CD4-positive, alpha-beta T cell (primary cell): ENCODE measurements at regions of chr11 and their contacts with region 1.

Region 1: GRCh38 chr11:2151500-2152257 is 9.3 kb downstream of the INS start:
- DNase-seq: peak; percentile 69 to 89 (median 76)
- ATAC-seq: peak; percentile 89
- H3K4me3 ChIP-seq: peak overlapping the region; percentile 8
- H3K4me3 Mint-ChIP-seq: peak overlapping the region; percentile 6
- H3K27ac ChIP-seq: no peak overlapping the region
- H3K27ac Mint-ChIP-seq: no peak overlapping the region
- H3K4me1 ChIP-seq: peaks cover 10% of the 10 kb centered on the region
- H3K4me1 Mint-ChIP-seq: peaks cover 9% of the 10 kb centered on the region
- H3K27me3 ChIP-seq: peaks cover 41 to 44% of the 10 kb centered on the region in 2 experiments
- H3K27me3 Mint-ChIP-seq: peaks cover 42% of the 10 kb centered on the region
- CTCF ChIP-seq: peak; percentile 78

Region 2: DNA sequence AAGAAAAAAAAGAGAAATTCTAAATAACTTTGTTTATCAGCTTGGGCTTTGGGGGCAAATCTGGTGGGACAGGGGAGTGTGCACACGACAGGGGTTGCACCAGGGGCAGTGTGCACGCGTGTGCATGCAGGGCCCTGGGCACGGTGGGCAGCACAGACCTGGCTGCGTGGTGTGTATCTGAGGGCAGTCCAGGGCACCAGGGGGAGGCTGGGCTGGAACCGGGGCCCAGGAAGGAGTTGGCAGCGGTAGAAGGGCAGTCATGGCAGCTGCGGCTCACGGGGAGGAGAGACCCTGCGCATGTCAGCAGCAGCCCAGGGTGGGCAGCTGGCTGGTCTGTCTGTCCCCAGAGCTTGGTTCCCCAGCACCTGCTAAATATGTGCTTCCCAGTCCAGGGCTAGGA is 517.8 kb before region 1 on chr11:
- CTCF ChIA-PET with region 1: no interaction called
- POLR2A ChIA-PET with region 1: no interaction called
- intact Hi-C with region 1: no loop called
- DNase-seq: no peak
- ATAC-seq: no peak
- H3K4me3 ChIP-seq: no peak overlapping the region
- H3K4me3 Mint-ChIP-seq: no peak overlapping the region
- H3K27ac ChIP-seq: no peak overlapping the region
- H3K27ac Mint-ChIP-seq: no peak overlapping the region
- H3K4me1 ChIP-seq: peaks cover 5% of the 10 kb centered on the region
- H3K4me1 Mint-ChIP-seq: peaks cover 9% of the 10 kb centered on the region
- H3K27me3 ChIP-seq: peaks cover 12 to 17% of the 10 kb centered on the region in 2 experiments
- H3K27me3 Mint-ChIP-seq: peaks cover 46% of the 10 kb centered on the region
- CTCF ChIP-seq: no peak

Region 3: DNA sequence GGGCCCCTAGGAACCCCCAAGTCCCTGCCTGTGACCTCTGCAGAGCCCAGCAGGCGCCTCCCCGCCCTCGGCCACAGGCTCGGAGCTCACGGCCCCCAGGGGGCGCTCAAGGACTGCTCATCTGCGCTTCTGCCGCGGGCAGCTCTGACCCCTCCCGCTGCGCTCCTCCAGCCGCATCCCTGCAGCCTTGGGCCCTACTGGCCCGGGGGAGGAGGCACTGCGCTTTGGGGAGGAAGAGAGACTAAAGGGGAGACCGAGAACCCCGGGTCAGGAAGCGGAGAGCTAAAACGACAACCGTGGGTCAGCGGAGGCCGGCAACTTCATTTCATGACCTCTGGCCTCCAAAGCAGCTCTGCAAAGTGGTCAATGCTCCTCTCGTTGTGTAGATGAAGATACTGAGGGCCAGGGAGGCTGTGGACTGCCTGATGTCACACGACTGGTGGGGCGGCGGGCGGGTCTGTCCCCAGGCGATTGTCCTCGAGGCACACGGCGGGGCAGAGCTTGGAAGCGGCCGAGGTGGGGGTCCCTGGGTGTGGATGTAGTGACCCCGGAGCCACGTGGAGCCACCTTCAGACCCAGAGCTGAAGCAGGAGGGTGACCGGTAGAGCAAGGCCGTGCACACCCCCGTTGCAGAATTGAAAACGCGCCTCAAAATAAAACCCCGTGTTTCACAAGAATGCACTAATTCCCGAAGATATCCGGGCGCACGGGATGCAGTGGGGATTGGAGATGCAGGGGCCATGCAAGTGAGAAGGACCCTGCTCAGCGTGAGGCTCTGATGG is 457.4 kb before region 1 on chr11:
- CTCF ChIA-PET with region 1: interaction called, 27 read pairs
- POLR2A ChIA-PET with region 1: no interaction called
- intact Hi-C with region 1: loop called (anchors 1 kb)
- DNase-seq: peak; percentile 55 to 93 (median 78)
- ATAC-seq: peak; percentile 75
- H3K4me3 ChIP-seq: no peak overlapping the region
- H3K4me3 Mint-ChIP-seq: no peak overlapping the region
- H3K27ac ChIP-seq: no peak overlapping the region
- H3K27ac Mint-ChIP-seq: no peak overlapping the region
- H3K4me1 ChIP-seq: peaks cover 15% of the 10 kb centered on the region
- H3K4me1 Mint-ChIP-seq: peaks cover 3% of the 10 kb centered on the region
- H3K27me3 ChIP-seq: peaks cover 10 to 28% of the 10 kb centered on the region in 2 experiments
- H3K27me3 Mint-ChIP-seq: peaks cover 8% of the 10 kb centered on the region
- CTCF ChIP-seq: peak; percentile 77

Region 4: DNA sequence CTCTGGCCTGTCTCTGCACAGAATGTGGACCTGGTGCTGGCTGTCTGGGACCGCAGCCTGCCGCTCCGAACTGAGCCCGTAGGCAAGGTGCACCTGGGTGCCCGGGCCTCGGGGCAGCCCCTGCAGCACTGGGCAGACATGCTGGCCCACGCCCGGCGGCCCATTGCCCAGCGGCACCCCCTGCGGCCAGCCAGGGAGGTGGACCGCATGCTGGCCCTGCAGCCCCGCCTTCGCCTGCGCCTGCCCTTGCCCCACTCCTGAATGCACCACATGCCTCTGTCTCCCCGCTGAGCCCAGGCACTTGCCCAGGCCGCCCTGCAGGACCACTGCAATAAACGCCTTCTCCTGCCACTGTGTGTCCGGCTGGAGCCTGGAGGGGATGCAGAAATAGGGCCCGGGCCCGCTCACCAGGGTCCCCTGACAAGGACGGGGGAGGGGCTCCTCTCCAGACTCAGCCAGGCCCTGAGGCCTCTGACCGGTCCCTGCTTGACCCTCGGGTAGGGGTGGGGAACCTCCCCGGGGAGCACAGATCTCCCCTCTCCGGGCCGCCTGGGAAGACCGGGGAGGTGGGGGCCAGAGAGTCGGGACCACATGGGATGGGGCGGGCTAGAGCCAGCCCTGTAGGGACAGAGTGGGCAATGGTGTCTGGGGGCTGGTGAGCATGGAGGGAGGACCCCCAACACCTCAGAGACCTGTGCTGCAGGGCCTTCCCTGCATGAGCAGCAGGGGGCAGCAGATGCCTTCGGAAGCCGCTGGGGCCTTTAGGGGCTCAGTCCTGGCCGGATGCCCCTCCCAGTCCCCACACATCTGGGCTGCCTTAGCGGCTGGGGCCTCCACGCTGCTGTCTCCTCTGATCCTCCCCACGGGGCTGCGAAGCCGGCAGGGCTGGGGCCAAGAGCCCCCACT is 314.3 kb before region 1 on chr11:
- CTCF ChIA-PET with region 1: interaction called, 11 read pairs
- POLR2A ChIA-PET with region 1: no interaction called
- intact Hi-C with region 1: loop called (anchors 1 kb)
- DNase-seq: peak; percentile 71 to 90 (median 78)
- ATAC-seq: peak; percentile 94
- H3K4me3 ChIP-seq: no peak overlapping the region
- H3K4me3 Mint-ChIP-seq: no peak overlapping the region
- H3K27ac ChIP-seq: no peak overlapping the region
- H3K27ac Mint-ChIP-seq: no peak overlapping the region
- H3K4me1 ChIP-seq: peaks cover 31% of the 10 kb centered on the region
- H3K4me1 Mint-ChIP-seq: peaks cover 10% of the 10 kb centered on the region
- H3K27me3 ChIP-seq: peaks cover 2 to 8% of the 10 kb centered on the region in 2 experiments
- H3K27me3 Mint-ChIP-seq: no peaks in the 10 kb centered on the region
- CTCF ChIP-seq: peak; percentile 95

Region 5: DNA sequence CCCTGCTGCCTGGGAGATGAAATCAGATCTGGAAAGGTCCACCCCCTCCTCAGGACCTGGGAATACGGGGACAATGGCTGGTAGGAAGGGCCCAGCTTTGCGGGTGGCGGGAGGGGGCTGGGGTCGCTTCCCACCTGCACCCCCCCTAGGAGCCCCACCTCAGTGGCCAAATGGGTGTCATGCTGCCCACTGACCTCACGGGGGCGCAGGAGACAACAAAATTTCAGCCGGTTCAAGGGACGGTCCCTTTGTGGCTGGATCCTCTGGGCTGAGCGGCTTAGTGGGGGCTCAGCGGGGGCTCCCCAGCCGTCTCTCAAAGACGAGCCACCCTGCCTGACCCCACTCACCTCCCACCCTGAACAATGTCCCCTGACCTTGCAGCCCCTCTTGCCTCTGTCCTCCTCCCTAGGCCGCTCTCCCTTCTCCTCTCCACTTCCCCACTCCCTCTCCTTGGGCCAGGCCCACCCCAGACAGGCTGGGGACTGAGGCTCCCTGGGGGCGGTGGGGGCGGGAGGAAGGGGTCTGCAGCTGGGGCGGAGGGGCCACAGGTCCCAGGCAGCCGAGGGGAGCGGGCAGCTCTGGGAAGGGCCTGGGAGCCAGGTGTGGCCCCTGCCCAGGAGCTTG is 114.7 kb before region 1 on chr11:
- CTCF ChIA-PET with region 1: interaction called, 53 read pairs
- POLR2A ChIA-PET with region 1: interaction called, 4 read pairs
- intact Hi-C with region 1: no loop called
- DNase-seq: no peak
- ATAC-seq: peak; percentile 68
- H3K4me3 ChIP-seq: no peak overlapping the region
- H3K4me3 Mint-ChIP-seq: no peak overlapping the region
- H3K27ac ChIP-seq: no peak overlapping the region
- H3K27ac Mint-ChIP-seq: no peak overlapping the region
- H3K4me1 ChIP-seq: no peaks in the 10 kb centered on the region
- H3K4me1 Mint-ChIP-seq: no peaks in the 10 kb centered on the region
- H3K27me3 ChIP-seq: no peaks in the 10 kb centered on the region
- H3K27me3 Mint-ChIP-seq: no peaks in the 10 kb centered on the region
- CTCF ChIP-seq: no peak

Region 6: GRCh38 chr11:2166091-2166851 is 14.6 kb after region 1 on chr11:
- CTCF ChIA-PET with region 1: no interaction called
- POLR2A ChIA-PET with region 1: no interaction called
- intact Hi-C with region 1: no loop called
- DNase-seq: peak in 11 of 14 experiments; percentile 12 to 65 (median 32)
- ATAC-seq: peak; percentile 48
- H3K4me3 ChIP-seq: no peak overlapping the region
- H3K4me3 Mint-ChIP-seq: no peak overlapping the region
- H3K27ac ChIP-seq: no peak overlapping the region
- H3K27ac Mint-ChIP-seq: no peak overlapping the region
- H3K4me1 ChIP-seq: peaks cover 5% of the 10 kb centered on the region
- H3K4me1 Mint-ChIP-seq: no peaks in the 10 kb centered on the region
- H3K27me3 ChIP-seq: peaks cover 0 to 12% of the 10 kb centered on the region in 2 experiments
- H3K27me3 Mint-ChIP-seq: peaks cover 12% of the 10 kb centered on the region
- CTCF ChIP-seq: peak; percentile 47

Region 7: GRCh38 chr11:2196970-2197770 is 45.5 kb after region 1 on chr11:
- CTCF ChIA-PET with region 1: no interaction called
- POLR2A ChIA-PET with region 1: no interaction called
- intact Hi-C with region 1: no loop called
- DNase-seq: peak; percentile 53 to 84 (median 62)
- ATAC-seq: peak; percentile 90
- H3K4me3 ChIP-seq: no peak overlapping the region
- H3K4me3 Mint-ChIP-seq: no peak overlapping the region
- H3K27ac ChIP-seq: no peak overlapping the region
- H3K27ac Mint-ChIP-seq: no peak overlapping the region
- H3K4me1 ChIP-seq: peaks cover 14% of the 10 kb centered on the region
- H3K4me1 Mint-ChIP-seq: peaks cover 13% of the 10 kb centered on the region
- H3K27me3 ChIP-seq: no peaks in the 10 kb centered on the region
- H3K27me3 Mint-ChIP-seq: no peaks in the 10 kb centered on the region
- CTCF ChIP-seq: peak; percentile 63